ENCODE measurements at regions of chr12 and their contacts with region 1.

Region 1: GRCh38 chr12:57124259-57124877 is 3.9 kb upstream of the LRP1 start:
- DNase-seq: peak; percentile 75 to 82
- H3K4me3 ChIP-seq: no peak overlapping the region
- H3K4me3 Mint-ChIP-seq: no peak overlapping the region
- H3K27ac Mint-ChIP-seq: no peak overlapping the region
- H3K4me1 ChIP-seq: peaks cover 8% of the 10 kb centered on the region
- H3K4me1 Mint-ChIP-seq: peaks cover 8% of the 10 kb centered on the region
- H3K27me3 ChIP-seq: no peaks in the 10 kb centered on the region
- H3K27me3 Mint-ChIP-seq: no peaks in the 10 kb centered on the region
- CTCF ChIP-seq: peak; percentile 86 to 88

Region 2: DNA sequence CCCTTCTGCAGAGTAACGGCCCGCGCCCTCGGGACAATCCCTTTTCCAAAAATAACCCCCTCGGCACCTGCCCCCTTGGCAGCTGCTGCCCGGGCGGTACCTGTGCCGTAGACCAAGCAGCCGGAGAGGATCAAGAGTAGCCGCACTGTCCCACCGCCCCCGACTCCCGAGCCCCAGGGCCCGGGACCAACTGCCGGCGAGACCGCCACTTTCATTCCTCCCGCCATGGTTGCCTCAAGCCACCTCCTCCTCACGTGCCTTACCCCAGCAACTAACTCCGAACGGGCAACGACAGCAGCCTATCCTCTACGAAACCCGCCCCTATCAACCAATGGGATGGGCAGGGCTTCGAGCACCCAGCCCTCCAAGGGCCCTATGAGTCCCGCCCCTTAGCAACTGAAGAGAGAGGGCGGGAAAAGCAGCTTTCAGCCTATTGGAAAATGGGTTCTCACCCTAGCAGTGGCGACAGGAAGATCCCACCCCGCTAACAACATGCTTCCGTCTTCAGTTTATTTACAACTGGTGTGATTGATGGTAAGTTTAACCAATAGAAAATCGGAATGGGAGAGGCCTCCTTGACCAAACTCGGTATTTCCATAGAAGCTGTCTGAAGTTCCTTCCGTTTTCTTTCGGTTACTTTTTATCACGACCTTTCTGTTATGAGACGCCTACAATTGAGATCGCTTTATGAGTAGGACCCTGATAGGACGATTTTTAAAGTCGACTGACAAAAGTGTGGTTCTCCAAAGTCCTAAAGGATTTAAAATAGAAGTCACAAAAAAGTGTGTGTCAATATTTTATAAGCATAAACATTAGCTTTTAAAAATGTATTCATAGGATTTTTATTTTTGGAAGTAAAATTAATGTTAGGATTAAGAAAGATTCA is 45.6 kb before region 1 on chr12 and contains the start of gene NEMP1:
- CTCF ChIA-PET with region 1: interaction called, 5 read pairs
- POLR2A ChIA-PET with region 1: interaction called, 22 read pairs
- intact Hi-C with region 1: no loop called
- DNase-seq: peak; percentile 97 to 99
- H3K4me3 ChIP-seq: peak within 1 kb of the TSS; percentile 75
- H3K4me3 Mint-ChIP-seq: peak within 1 kb of the TSS; percentile 98
- H3K27ac Mint-ChIP-seq: peak within 1 kb of the TSS; percentile 92
- H3K4me1 ChIP-seq: 0 out of 2 replicates have a peak, but pooled peaks cover 4% of the 10 kb centered on the region
- H3K4me1 Mint-ChIP-seq: no peaks in the 10 kb centered on the region
- H3K27me3 ChIP-seq: no peaks in the 10 kb centered on the region
- H3K27me3 Mint-ChIP-seq: no peaks in the 10 kb centered on the region
- CTCF ChIP-seq: no peak
- total RNA-seq, gene NEMP1: 38.3 and 40.1 TPM in 2 replicates

Region 3: DNA sequence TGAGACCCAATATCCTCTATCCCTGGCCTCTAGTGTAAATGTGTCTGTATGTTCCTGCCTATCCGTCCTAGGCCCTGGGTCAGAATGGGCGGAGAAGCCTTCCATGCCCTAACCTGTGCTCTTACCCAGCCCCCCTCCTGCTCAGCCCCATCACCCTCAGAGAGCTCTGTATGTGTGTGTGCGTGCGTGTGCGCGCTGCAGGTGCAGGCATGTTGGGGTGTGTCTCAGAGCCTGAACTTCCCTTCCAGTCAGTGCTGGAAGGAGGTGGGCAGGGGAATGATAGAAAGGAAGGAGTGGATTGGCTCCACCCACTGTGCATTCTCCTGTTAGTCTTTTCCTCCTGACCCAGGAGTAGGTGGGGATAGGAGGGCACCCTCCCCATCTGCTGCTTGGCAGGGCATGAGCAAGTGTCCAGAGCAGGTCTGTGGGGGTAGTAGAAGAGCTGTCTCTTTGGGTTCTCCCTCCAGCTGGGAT is 28.2 kb before region 1 on chr12:
- CTCF ChIA-PET with region 1: interaction called, 3 read pairs
- POLR2A ChIA-PET with region 1: interaction called, 12 read pairs
- intact Hi-C with region 1: no loop called
- DNase-seq: no peak
- H3K4me3 ChIP-seq: no peak overlapping the region
- H3K4me3 Mint-ChIP-seq: no peak overlapping the region
- H3K27ac Mint-ChIP-seq: no peak overlapping the region
- H3K4me1 ChIP-seq: peaks cover 6% of the 10 kb centered on the region; the same call in 1 of the 2 replicates
- H3K4me1 Mint-ChIP-seq: peaks cover 9% of the 10 kb centered on the region
- H3K27me3 ChIP-seq: no peaks in the 10 kb centered on the region
- H3K27me3 Mint-ChIP-seq: no peaks in the 10 kb centered on the region
- CTCF ChIP-seq: no peak

Region 4: GRCh38 chr12:57175428-57176138 is 51.2 kb after region 1 on chr12:
- CTCF ChIA-PET with region 1: interaction called, 21 read pairs
- POLR2A ChIA-PET with region 1: interaction called, 4 read pairs
- intact Hi-C with region 1: loop called (anchors 1 kb)
- DNase-seq: peak; percentile 55 to 75
- H3K4me3 ChIP-seq: no peak overlapping the region
- H3K4me3 Mint-ChIP-seq: no peak overlapping the region
- H3K27ac Mint-ChIP-seq: no peak overlapping the region
- H3K4me1 ChIP-seq: no peaks in the 10 kb centered on the region
- H3K4me1 Mint-ChIP-seq: no peaks in the 10 kb centered on the region
- H3K27me3 ChIP-seq: no peaks in the 10 kb centered on the region
- H3K27me3 Mint-ChIP-seq: no peaks in the 10 kb centered on the region
- CTCF ChIP-seq: peak; percentile 61 to 63

Region 5: GRCh38 chr12:57229634-57230380 is 105.4 kb after region 1 on chr12 and contains the start of gene SHMT2:
- CTCF ChIA-PET with region 1: interaction called, 3 read pairs
- POLR2A ChIA-PET with region 1: interaction called, 23 read pairs
- intact Hi-C with region 1: no loop called
- DNase-seq: peak; percentile 94 to 96
- H3K4me3 ChIP-seq: peak within 1 kb of the TSS; percentile 62
- H3K4me3 Mint-ChIP-seq: peak within 1 kb of the TSS; percentile 100
- H3K27ac Mint-ChIP-seq: peak within 1 kb of the TSS; percentile 100
- H3K4me1 ChIP-seq: peaks cover 4% of the 10 kb centered on the region; the same call in 1 of the 2 replicates
- H3K4me1 Mint-ChIP-seq: peaks cover 14% of the 10 kb centered on the region
- H3K27me3 ChIP-seq: no peaks in the 10 kb centered on the region
- H3K27me3 Mint-ChIP-seq: no peaks in the 10 kb centered on the region
- CTCF ChIP-seq: no peak
- total RNA-seq, gene SHMT2: 387 and 466 TPM in 2 replicates